ENCODE measurements at regions of chrX and their contacts with region 1.

Region 1: DNA sequence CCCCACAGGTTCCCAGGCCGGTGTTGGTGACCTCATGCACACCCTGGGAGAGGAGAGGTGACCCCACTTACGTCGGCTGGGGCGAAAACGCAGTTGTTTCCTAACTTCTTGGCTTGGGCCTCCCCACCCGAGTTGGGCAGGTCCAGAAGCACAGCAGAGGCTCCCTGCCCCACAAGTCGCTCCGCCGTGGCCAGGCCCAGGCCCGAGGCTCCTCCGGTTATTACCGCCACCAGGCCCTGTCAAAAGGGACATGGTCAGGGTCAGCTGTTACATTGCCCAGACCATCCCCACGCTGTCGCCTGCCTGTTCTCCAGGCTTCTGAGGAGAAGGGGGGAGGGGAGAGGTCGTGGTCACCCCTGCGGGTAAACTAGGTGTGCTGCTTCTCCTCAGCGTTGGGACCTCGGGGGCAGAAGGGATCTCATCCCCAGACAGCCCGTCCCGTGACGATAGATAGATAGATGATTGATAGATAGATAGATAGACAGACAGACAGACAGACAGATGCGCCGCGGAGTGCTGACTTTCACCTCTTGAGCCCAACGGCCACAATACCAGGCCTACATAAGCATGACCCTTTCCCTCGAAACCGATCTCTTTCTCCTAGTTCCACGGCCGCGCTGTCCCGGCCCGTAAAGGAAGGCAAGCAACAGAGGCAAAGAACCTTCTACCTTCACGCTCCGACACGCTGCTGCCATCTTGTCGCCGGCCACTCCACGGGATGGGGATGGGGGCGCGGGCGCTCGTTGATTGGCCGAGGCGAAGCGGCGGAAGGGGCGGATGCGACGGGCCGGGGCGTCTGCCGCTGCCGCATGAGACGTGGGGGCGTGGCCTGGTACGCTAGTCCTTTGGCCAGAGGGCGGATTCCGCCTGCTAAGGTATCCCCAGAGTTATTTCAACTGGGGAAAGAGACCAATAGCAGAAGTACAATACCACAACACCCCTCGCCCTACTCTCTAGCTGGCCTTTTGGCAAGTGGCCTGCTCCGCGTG is at the start of gene HSD17B10:
- DNase-seq: peak; percentile 76
- H3K4me3 ChIP-seq: peak within 1 kb of the TSS; percentile 36 to 65 (median 63)
- H3K27ac ChIP-seq: peak within 1 kb of the TSS; percentile 56
- H3K4me1 ChIP-seq: peaks cover 4% of the 10 kb centered on the region
- H3K27me3 ChIP-seq: peaks cover 3% of the 10 kb centered on the region
- CTCF ChIP-seq: no peak
- total RNA-seq, gene HSD17B10: 71.7 to 74.6 TPM

Region 2: GRCh38 chrX:53004811-53005210 is 429.1 kb before region 1 on chrX:
- CTCF ChIA-PET with region 1: no interaction called
- dilution Hi-C with region 1: no loop called
- in situ Hi-C with region 1: no loop called
- intact Hi-C with region 1: no loop called
- DNase-seq: no peak
- H3K4me3 ChIP-seq: no peak overlapping the region
- H3K27ac ChIP-seq: no peak overlapping the region
- H3K4me1 ChIP-seq: no peaks in the 10 kb centered on the region
- H3K27me3 ChIP-seq: no peaks in the 10 kb centered on the region
- CTCF ChIP-seq: no peak

Region 3: GRCh38 chrX:53340852-53341607 is 92.9 kb before region 1 on chrX:
- CTCF ChIA-PET with region 1: no interaction called
- dilution Hi-C with region 1: no loop called
- in situ Hi-C with region 1: no loop called
- intact Hi-C with region 1: no loop called
- DNase-seq: no peak
- H3K4me3 ChIP-seq: no peak overlapping the region
- H3K27ac ChIP-seq: no peak overlapping the region
- H3K4me1 ChIP-seq: no peaks in the 10 kb centered on the region
- H3K27me3 ChIP-seq: peaks cover 2% of the 10 kb centered on the region
- CTCF ChIP-seq: no peak

Region 4: DNA sequence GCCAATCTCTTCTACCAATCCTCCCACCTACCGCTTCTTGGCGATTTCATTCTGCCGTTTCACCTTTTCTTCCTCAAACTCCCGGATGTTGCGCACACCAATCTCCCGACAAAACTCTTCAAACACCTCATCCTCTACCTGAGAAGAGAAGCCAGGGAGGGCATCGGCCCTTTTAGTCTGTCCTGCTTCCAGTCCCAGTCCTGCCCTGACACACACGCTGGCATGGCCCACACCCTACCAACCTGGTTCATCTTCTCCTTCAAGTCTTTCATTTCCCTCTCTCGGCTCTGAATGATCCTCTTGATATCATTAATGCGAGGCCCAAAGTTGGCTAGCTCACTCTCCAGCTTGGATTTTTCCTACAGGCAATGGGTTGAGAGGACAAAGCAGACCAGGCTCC is 30.4 kb before region 1 on chrX:
- CTCF ChIA-PET with region 1: interaction called, 25 read pairs
- dilution Hi-C with region 1: no loop called
- in situ Hi-C with region 1: no loop called
- intact Hi-C with region 1: no loop called
- DNase-seq: no peak
- H3K4me3 ChIP-seq: no peak overlapping the region
- H3K27ac ChIP-seq: no peak overlapping the region
- H3K4me1 ChIP-seq: no peaks in the 10 kb centered on the region
- H3K27me3 ChIP-seq: no peaks in the 10 kb centered on the region
- CTCF ChIP-seq: no peak

Region 5: GRCh38 chrX:53422086-53422860 is 11.7 kb before region 1 on chrX and contains the start of gene SMC1A:
- CTCF ChIA-PET with region 1: interaction called, 4 read pairs
- dilution Hi-C with region 1: no loop called
- in situ Hi-C with region 1: no loop called
- intact Hi-C with region 1: loop called (anchors 1 kb)
- DNase-seq: peak; percentile 98
- H3K4me3 ChIP-seq: peak within 1 kb of the TSS; percentile 79 to 87 (median 87)
- H3K27ac ChIP-seq: peak within 1 kb of the TSS; percentile 92
- H3K4me1 ChIP-seq: peaks cover 19% of the 10 kb centered on the region
- H3K27me3 ChIP-seq: no peaks in the 10 kb centered on the region
- CTCF ChIP-seq: no peak
- total RNA-seq, gene SMC1A: 19.7 to 66.0 TPM

Region 6: DNA sequence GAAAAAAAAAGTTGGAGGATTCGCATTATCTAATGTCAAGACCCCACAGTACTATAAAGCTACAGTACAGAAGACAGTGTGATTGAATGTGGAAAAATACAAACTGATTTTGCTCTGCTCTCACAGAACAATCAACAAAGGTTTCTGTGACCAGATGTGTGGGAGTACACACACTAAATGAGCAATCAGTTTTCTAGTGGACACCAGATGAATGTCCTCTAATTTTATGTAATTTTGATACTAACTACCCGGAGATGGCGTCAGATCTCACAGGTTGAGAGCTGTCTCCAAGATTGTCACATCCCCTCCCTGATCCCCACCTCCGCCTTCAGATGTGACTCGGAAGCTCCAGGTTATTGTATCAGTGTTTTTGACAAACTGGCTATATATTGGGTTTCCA is 334.5 kb after region 1 on chrX:
- CTCF ChIA-PET with region 1: no interaction called
- dilution Hi-C with region 1: no loop called
- in situ Hi-C with region 1: no loop called
- intact Hi-C with region 1: no loop called
- DNase-seq: no peak
- H3K4me3 ChIP-seq: no peak overlapping the region
- H3K27ac ChIP-seq: no peak overlapping the region
- H3K4me1 ChIP-seq: no peaks in the 10 kb centered on the region
- H3K27me3 ChIP-seq: no peaks in the 10 kb centered on the region
- CTCF ChIP-seq: no peak

Measured in mammary epithelial cell (primary cell).